Breast epithelium (tissue), 4 donors: ENCODE measurements at regions of chr19 and their contacts with region 1.

Region 1: GRCh38 chr19:13262450-13262849 is 112.2 kb downstream of the IER2 start:
- DNase-seq: no peak
- H3K4me3 ChIP-seq: no peak overlapping the region
- H3K27ac ChIP-seq: no peak overlapping the region
- H3K4me1 ChIP-seq: no peaks in the 10 kb centered on the region
- H3K27me3 ChIP-seq: no peaks in the 10 kb centered on the region
- CTCF ChIP-seq: peak; percentile 14 to 71 (median 59)
- POLR2A ChIP-seq: no peak

Region 2: GRCh38 chr19:12965017-12965811 is 297.2 kb before region 1 on chr19:
- intact Hi-C with region 1: loop called (anchors 5 kb)
- DNase-seq: peak; percentile 70 to 82
- H3K4me3 ChIP-seq: peak overlapping the region; percentile 34 to 67 (median 49)
- H3K27ac ChIP-seq: peak overlapping the region; percentile 75 to 84
- H3K4me1 ChIP-seq: no peaks in the 10 kb centered on the region
- H3K27me3 ChIP-seq: no peaks in the 10 kb centered on the region
- CTCF ChIP-seq: peak; percentile 83 to 96 (median 96)
- POLR2A ChIP-seq: no peak

Region 3: DNA sequence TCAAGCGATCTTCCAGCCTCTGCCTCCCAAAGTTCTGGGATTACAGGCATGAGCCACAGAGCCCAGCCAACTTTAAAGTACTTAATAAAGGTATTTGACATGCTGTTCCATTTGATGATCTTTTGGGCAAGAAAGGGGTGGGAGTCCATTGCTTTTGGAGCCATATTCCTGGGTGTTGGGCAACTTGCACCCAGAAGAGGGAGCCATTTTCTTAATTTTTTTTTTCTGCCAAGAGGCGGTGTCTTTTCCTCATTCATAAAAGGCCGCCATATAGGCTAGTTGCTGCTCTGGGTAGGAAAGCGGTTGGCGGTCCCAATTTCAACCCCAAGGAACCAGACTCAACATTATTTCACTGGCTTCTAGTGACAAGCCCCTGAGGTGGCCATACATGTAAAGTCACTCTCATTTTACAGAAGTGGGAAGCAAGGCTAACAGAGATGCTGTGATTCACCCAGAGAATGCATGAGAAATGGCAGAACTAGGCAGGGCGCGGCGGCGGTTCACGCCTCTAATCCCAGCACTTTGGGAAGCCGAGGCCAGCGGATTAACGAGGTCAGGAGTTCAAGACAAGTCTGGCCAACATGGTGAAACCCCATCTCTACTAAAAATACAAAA is 104.2 kb after region 1 on chr19:
- intact Hi-C with region 1: no loop called
- DNase-seq: no peak
- H3K4me3 ChIP-seq: no peak overlapping the region
- H3K27ac ChIP-seq: no peak overlapping the region
- H3K4me1 ChIP-seq: no peaks in the 10 kb centered on the region
- H3K27me3 ChIP-seq: peaks cover 0 to 20% of the 10 kb centered on the region in 2 donors
- CTCF ChIP-seq: no peak
- POLR2A ChIP-seq: no peak